AG04449 (cell line): ENCODE measurements at regions of chr17 and their contacts with region 1.

Region 1: GRCh38 chr17:70158180-70158579 is 11.2 kb upstream of the KCNJ2 start:
- DNase-seq: no peak
- H3K4me3 ChIP-seq: no peak overlapping the region
- CTCF ChIP-seq: no peak

Region 2: GRCh38 chr17:70144260-70144846 is 13.8 kb before region 1 on chr17:
- CTCF ChIA-PET with region 1: interaction called, 10 read pairs
- POLR2A ChIA-PET with region 1: no interaction called
- DNase-seq: no peak
- H3K4me3 ChIP-seq: no peak overlapping the region
- CTCF ChIP-seq: peak; percentile 24

Region 3: GRCh38 chr17:70168977-70169708 is 11.0 kb after region 1 on chr17 and contains the start of gene KCNJ2:
- CTCF ChIA-PET with region 1: no interaction called
- POLR2A ChIA-PET with region 1: no interaction called
- DNase-seq: no peak
- H3K4me3 ChIP-seq: peak within 1 kb of the TSS; percentile 53
- CTCF ChIP-seq: no peak

Region 4: DNA sequence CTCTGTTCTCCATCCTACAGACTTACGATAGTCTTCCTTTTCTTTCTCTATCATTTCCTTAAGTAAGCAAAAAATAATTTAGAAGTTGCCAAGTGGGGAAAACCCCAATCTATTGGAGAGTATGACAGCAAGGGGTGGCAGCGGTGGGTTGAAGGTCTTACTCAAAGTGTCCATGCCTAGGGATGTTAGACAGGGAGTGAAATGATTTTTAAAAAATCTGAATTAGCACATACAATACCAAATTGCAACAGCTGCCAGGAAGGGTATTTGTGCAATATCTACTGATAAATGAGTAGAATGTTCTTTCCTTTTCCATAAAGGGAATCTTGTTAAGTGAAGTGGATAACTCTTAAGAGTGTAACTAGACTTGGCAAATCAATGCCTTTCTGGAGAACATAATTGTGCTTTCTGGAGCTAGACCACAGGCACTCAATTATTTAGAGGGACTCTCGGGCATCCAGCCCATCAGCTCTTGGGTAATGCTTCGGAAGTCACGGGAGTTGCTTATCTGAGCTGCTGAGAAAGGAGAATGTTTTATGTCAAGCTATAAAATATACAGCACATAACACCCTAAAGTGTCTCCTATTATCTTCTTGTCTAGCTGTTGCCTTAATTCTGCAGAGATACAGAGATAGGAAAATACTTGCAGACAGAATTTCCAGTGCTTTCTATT is 162.6 kb after region 1 on chr17:
- CTCF ChIA-PET with region 1: no interaction called
- POLR2A ChIA-PET with region 1: no interaction called
- DNase-seq: no peak
- H3K4me3 ChIP-seq: no peak overlapping the region
- CTCF ChIP-seq: no peak